Right ventricle myocardium superior (tissue), 1 donor: ENCODE measurements at regions of chr10 and their contacts with region 1.

Region 1: GRCh38 chr10:119872860-119873681 is 428 bp upstream of the MCMBP start:
- DNase-seq: peak; percentile 94
- ATAC-seq: peak; percentile 99

Region 2: GRCh38 chr10:119596537-119597404 is 276.3 kb before region 1 on chr10 and contains the start of gene TIAL1:
- intact Hi-C with region 1: loop called (anchors 10 kb)
- DNase-seq: peak; percentile 98
- ATAC-seq: peak; percentile 94
- total RNA-seq, gene TIAL1: 75.1 TPM